Colonic mucosa (tissue), 4 donors: ENCODE measurements at regions of chrX and their contacts with region 1.

Region 1: GRCh38 chrX:31633349-31633748 is 561.5 kb upstream of the FTHL17 start:
- DNase-seq: no peak
- H3K4me3 ChIP-seq: no peak overlapping the region
- H3K27ac ChIP-seq: no peak overlapping the region
- H3K4me1 ChIP-seq: no peaks in the 10 kb centered on the region
- H3K27me3 ChIP-seq: no peaks in the 10 kb centered on the region
- CTCF ChIP-seq: no peak

Region 2: DNA sequence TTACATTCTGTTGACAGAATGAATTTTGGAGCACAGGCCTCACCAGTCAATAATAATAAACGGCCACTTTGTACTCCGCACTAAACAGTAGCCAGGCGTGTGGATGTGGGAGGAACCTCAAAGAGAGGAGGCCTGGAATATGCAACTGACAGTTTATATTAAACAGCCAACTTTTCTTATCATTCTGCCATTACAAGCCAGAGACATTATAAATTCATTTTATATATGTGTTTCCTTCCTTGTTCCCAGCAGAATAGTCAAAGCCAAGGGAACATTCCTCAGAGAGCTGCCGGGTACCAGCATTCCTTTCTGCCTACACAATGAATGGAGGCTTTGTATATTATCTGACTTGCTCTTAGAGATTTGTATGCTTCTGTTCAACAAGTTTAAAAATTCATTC is 125.0 kb before region 1 on chrX:
- intact Hi-C with region 1: loop called (anchors 5 kb)
- DNase-seq: no peak
- H3K4me3 ChIP-seq: no peak overlapping the region
- H3K27ac ChIP-seq: no peak overlapping the region
- H3K4me1 ChIP-seq: no peaks in the 10 kb centered on the region
- H3K27me3 ChIP-seq: no peaks in the 10 kb centered on the region
- CTCF ChIP-seq: no peak

Region 3: DNA sequence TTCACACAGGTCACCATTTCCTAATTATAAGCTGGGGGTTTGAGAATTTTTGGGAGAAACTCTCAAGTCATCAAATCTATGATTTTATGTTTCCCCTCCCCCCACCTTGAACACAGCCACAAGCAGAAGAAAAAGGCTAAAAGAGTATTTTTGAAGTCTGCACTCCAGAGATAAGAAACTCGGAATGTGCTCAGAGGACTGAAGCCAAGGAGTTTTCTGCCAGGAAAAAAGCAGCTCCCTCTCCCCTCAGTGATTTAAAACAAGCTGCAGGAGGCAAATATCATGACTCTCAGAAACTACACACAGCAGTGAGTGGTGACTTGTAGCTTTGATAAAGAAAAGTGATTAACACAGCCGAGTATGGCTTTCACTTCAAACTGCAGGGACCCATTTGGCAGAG is 238.6 kb after region 1 on chrX:
- intact Hi-C with region 1: no loop called
- DNase-seq: no peak
- H3K4me3 ChIP-seq: no peak overlapping the region
- H3K27ac ChIP-seq: no peak overlapping the region
- H3K4me1 ChIP-seq: no peaks in the 10 kb centered on the region
- H3K27me3 ChIP-seq: no peaks in the 10 kb centered on the region
- CTCF ChIP-seq: no peak

Region 4: GRCh38 chrX:32084757-32085156 is 451.4 kb after region 1 on chrX:
- intact Hi-C with region 1: no loop called
- DNase-seq: no peak
- H3K4me3 ChIP-seq: no peak overlapping the region
- H3K27ac ChIP-seq: no peak overlapping the region
- H3K4me1 ChIP-seq: no peaks in the 10 kb centered on the region
- H3K27me3 ChIP-seq: no peaks in the 10 kb centered on the region
- CTCF ChIP-seq: no peak